ENCODE measurements at regions of chr18 and their contacts with region 1.

Region 1: DNA sequence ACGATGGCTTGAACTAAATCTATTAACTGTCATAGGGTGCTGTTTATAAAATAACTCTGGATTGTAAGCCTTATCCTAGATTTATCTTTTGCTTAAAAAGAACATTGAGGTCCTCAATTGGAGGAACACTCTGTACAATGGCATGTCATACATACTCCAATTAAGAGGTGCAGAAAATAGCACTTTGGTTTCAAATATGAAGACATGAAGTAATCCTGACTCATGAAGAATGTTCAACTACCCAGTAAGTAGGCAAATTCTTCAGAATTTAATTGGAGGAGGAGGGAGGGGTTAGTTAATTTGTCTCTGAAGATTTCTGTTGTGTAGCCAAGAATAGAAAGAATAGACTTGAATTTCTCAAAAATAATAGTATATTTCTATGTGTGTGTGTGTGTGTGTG is 36.1 kb downstream of the DCC start:
- DNase-seq: no peak
- H3K4me3 ChIP-seq: no peak overlapping the region
- H3K27ac ChIP-seq: no peak overlapping the region
- H3K4me1 ChIP-seq: no peaks in the 10 kb centered on the region
- H3K27me3 ChIP-seq: no peaks in the 10 kb centered on the region
- CTCF ChIP-seq: no peak
- EP300 ChIP-seq: no peak
- POLR2A ChIP-seq: no peak

Region 2: DNA sequence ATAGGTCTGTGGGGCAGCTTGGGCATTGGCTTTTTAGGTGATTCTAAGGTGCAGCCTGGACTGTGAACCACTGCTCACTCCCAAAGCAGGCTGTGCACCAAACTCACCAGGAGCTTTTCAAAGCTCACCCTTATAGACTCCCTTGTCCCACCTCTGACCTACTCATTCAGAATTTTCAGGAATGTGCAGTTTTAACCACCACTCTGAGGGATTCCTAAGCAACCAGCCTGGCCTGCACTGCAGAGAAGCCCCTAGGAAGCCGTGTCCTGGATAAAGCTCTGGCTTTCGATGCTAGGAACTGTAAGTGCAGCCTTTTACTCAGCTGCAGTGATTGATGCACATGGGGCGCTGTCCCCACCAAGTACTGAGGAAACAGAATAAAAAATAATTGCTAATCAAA is 1589.2 kb before region 1 on chr18:
- in situ Hi-C with region 1: no loop called
- intact Hi-C with region 1: no loop called
- DNase-seq: no peak
- H3K4me3 ChIP-seq: no peak overlapping the region
- H3K27ac ChIP-seq: no peak overlapping the region
- H3K4me1 ChIP-seq: peaks cover 0 to 8% (median 2%) of the 10 kb centered on the region in 4 donors
- H3K27me3 ChIP-seq: no peaks in the 10 kb centered on the region
- CTCF ChIP-seq: no peak
- EP300 ChIP-seq: no peak
- POLR2A ChIP-seq: no peak

Region 3: GRCh38 chr18:52353589-52353988 is 22.5 kb before region 1 on chr18:
- in situ Hi-C with region 1: no loop called
- intact Hi-C with region 1: loop called (anchors 1 kb)
- DNase-seq: no peak
- H3K4me3 ChIP-seq: no peak overlapping the region
- H3K27ac ChIP-seq: peak overlapping the region in 1 of 4 donors; percentile 35
- H3K4me1 ChIP-seq: peaks cover 0 to 7% (median 3%) of the 10 kb centered on the region in 4 donors
- H3K27me3 ChIP-seq: no peaks in the 10 kb centered on the region
- CTCF ChIP-seq: no peak
- EP300 ChIP-seq: no peak
- POLR2A ChIP-seq: no peak

Region 4: GRCh38 chr18:52694804-52695203 is 318.7 kb after region 1 on chr18:
- in situ Hi-C with region 1: no loop called
- intact Hi-C with region 1: no loop called
- DNase-seq: peak; percentile 10
- H3K4me3 ChIP-seq: no peak overlapping the region
- H3K27ac ChIP-seq: no peak overlapping the region
- H3K4me1 ChIP-seq: no peaks in the 10 kb centered on the region
- H3K27me3 ChIP-seq: no peaks in the 10 kb centered on the region
- CTCF ChIP-seq: peak in 2 of 5 experiments; percentile 25 to 28
- EP300 ChIP-seq: no peak
- POLR2A ChIP-seq: no peak

Region 5: GRCh38 chr18:52945552-52945951 is 569.4 kb after region 1 on chr18:
- in situ Hi-C with region 1: no loop called
- intact Hi-C with region 1: no loop called
- DNase-seq: no peak
- H3K4me3 ChIP-seq: no peak overlapping the region
- H3K27ac ChIP-seq: no peak overlapping the region
- H3K4me1 ChIP-seq: no peaks in the 10 kb centered on the region
- H3K27me3 ChIP-seq: no peaks in the 10 kb centered on the region
- CTCF ChIP-seq: no peak
- EP300 ChIP-seq: no peak
- POLR2A ChIP-seq: no peak